SK-MEL-5 (cell line): ENCODE measurements at regions of chr12 and their contacts with region 1.

Region 1: GRCh38 chr12:64440100-64440499 is 11.8 kb upstream of the TBK1 start:
- DNase-seq: no peak

Region 2: GRCh38 chr12:64273527-64274403 is 166.3 kb before region 1 on chr12:
- in situ Hi-C with region 1: no loop called
- DNase-seq: peak; percentile 77

Region 3: DNA sequence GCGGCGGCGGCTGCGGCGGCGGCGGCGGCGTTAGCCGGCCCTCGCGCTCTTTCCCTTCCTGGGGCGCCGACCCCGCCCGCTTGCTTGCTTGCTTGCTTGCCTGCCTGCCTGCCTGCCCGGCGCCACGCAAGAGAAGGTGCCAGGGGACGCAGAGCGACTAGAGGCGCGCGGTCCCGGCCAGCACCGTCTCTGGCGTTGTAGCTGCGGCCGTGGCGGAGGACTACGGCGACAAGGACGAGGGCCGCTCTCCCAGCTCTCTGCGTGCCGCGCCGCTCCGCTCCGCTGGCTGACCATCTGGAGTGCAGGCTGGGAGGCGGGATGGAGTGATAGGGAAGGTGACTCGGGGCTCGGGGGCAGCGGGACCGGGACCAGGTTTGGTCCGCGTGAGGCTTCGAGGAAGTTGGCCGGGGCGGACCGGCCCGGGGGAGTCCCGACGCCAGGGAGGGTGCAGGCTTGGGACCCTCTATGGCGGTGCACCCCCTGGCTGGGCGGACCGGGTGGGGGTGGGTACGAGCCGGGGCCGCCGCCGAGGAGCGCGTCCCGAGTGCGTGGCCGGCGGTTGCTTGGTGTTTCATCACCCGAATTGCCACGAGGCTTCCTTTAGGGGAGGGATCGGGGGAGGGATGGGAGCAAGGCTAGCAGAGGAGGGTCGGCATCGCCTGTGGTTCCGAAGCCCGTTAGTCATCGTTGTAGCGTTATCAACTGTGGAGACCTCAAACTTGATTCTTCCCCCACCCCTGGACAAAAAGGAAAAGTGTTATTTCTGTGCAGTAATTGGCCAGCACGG is 35.4 kb before region 1 on chr12:
- in situ Hi-C with region 1: loop called (anchors 5 kb)
- DNase-seq: peak; percentile 88